CD8-positive, alpha-beta T cell (primary cell): ENCODE measurements at regions of chr5 and their contacts with region 1.

Region 1: GRCh38 chr5:56919942-56920662 is 10.7 kb downstream of the SETD9 start:
- DNase-seq: no peak
- ATAC-seq: no peak
- H3K4me3 ChIP-seq: no peak overlapping the region
- H3K4me3 Mint-ChIP-seq: no peak overlapping the region
- H3K27ac ChIP-seq: no peak overlapping the region
- H3K27ac Mint-ChIP-seq: no peak overlapping the region
- H3K4me1 ChIP-seq: no peaks in the 10 kb centered on the region
- H3K4me1 Mint-ChIP-seq: peaks cover 3% of the 10 kb centered on the region
- H3K27me3 ChIP-seq: no peaks in the 10 kb centered on the region
- H3K27me3 Mint-ChIP-seq: no peaks in the 10 kb centered on the region
- CTCF ChIP-seq: no peak

Region 2: GRCh38 chr5:56934325-56934724 is 14.2 kb after region 1 on chr5:
- CTCF ChIA-PET with region 1: no interaction called
- POLR2A ChIA-PET with region 1: no interaction called
- intact Hi-C with region 1: loop called in 1 of 2 experiments (anchors 2 kb)
- DNase-seq: no peak
- ATAC-seq: no peak
- H3K4me3 ChIP-seq: no peak overlapping the region
- H3K4me3 Mint-ChIP-seq: no peak overlapping the region
- H3K27ac ChIP-seq: no peak overlapping the region
- H3K27ac Mint-ChIP-seq: no peak overlapping the region
- H3K4me1 ChIP-seq: no peaks in the 10 kb centered on the region
- H3K4me1 Mint-ChIP-seq: no peaks in the 10 kb centered on the region
- H3K27me3 ChIP-seq: no peaks in the 10 kb centered on the region
- H3K27me3 Mint-ChIP-seq: no peaks in the 10 kb centered on the region
- CTCF ChIP-seq: no peak